Dorsolateral prefrontal cortex (tissue), 120 donors: ENCODE measurements at regions of chr17 and their contacts with region 1.

Region 1: DNA sequence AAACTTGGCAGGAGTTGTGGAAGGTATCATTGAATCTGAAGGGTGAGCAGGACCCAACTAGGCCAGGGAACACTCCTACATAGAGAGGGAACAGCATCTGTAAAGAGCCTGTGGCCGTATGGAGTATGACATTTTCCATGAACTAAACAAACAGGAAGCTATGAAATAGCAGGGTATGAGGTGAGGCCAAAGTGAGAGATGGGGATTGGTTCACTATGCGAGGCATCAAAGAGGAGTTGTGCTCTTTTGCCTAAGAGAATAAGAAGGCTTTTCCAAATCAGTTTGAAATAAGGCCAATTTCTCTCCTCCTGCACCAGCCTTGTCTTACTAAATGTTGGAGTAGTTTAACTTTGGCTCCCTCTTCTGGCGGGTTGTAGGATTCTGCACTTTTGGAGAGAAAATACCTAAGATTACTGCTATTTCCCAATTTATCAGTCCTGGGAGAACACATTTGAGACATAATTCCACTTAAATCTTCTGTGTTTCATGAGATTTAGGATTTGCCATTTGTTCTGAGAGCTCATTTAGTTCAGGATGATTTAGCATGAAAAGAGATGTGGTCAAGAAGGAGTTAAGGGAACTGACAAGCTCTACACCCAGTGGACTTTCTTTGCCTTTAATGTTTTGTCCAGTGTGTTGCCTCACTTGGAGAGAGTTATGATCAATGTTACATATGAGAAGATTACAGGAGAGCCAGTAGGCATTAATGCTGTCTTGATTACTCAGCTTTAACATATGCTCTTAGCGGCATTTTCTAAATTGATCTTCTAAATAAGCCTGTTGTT is 55.4 kb downstream of the TNRC6C start:
- DNase-seq: peak in 4 of 10 donors; percentile 41 to 76 (median 58)
- H3K4me3 ChIP-seq: no peak overlapping the region
- H3K27ac ChIP-seq: peak overlapping the region in 44 of 59 donors; percentile 2 to 77 (median 42)
- H3K27me3 ChIP-seq: no peaks in the 10 kb centered on the region
- CTCF ChIP-seq: peak; percentile 58 to 98 (median 87)

Region 2: GRCh38 chr17:77963441-77963840 is 50.4 kb before region 1 on chr17:
- intact Hi-C with region 1: loop called (anchors 5 kb)
- DNase-seq: peak in 7 of 10 donors; percentile 52 to 80 (median 62)
- H3K4me3 ChIP-seq: peak overlapping the region in 34 of 59 donors; percentile 2 to 90 (median 75)
- H3K27ac ChIP-seq: peak overlapping the region in 38 of 59 donors; percentile 1 to 74 (median 44)
- H3K27me3 ChIP-seq: no peaks in the 10 kb centered on the region
- CTCF ChIP-seq: peak in 9 of 56 donors; percentile 5 to 40 (median 15)